GM12878 (cell line): ENCODE measurements at regions of chr6 and their contacts with region 1.

Region 1: GRCh38 chr6:72622094-72622940 is 453 bp downstream of the KCNQ5 start:
- DNase-seq: no peak
- ATAC-seq: peak; percentile 52
- H3K4me3 ChIP-seq: peak overlapping the region; percentile 100
- H3K27ac ChIP-seq: peak overlapping the region; percentile 89
- H3K4me1 ChIP-seq: peaks cover 27% of the 10 kb centered on the region
- H3K27me3 ChIP-seq: no peaks in the 10 kb centered on the region
- CTCF ChIP-seq: peak; percentile 7 to 34 (median 22); a peak in 3 of 6 replicates
- EP300 ChIP-seq: no peak
- POLR2A ChIP-seq: peak; percentile 59
- RAD21 ChIP-seq: 0 out of 2 replicates have a peak, but pooled peaks have one; percentile 5

Region 2: GRCh38 chr6:72080260-72080941 is 541.9 kb before region 1 on chr6:
- CTCF ChIA-PET with region 1: no interaction called
- POLR2A ChIA-PET with region 1: no interaction called
- RAD21 ChIA-PET with region 1: no interaction called
- SMC1A ChIA-PET with region 1: no interaction called
- in situ Hi-C with region 1: no loop called
- intact Hi-C with region 1: no loop called
- DNase-seq: no peak
- ATAC-seq: no peak
- H3K4me3 ChIP-seq: no peak overlapping the region
- H3K27ac ChIP-seq: no peak overlapping the region
- H3K4me1 ChIP-seq: no peaks in the 10 kb centered on the region
- H3K27me3 ChIP-seq: no peaks in the 10 kb centered on the region; a peak in 1 of 4 replicates
- CTCF ChIP-seq: no peak
- EP300 ChIP-seq: no peak
- POLR2A ChIP-seq: no peak
- RAD21 ChIP-seq: no peak

Region 3: DNA sequence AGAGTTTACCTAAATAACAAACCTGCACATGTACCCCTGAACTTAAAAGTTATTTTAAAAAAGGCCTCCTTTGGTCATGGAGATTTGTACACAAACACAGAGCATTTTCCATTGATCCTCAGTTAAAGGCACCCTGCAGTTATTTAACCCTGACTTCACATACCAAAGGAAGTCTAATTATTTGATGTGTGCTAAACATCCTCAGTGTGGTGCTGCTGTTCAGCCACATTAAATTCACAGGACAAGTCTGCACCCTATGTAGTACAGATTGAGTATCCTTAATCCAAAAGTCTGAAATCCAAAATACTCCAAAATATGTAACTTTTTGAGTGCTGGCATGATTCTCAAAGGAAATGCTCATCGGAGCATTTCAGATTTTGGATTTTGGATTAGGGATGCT is 20.9 kb after region 1 on chr6:
- CTCF ChIA-PET with region 1: interaction called, 53 read pairs
- POLR2A ChIA-PET with region 1: interaction called, 23 read pairs
- RAD21 ChIA-PET with region 1: interaction called, 172 read pairs
- SMC1A ChIA-PET with region 1: interaction called, 108 read pairs
- in situ Hi-C with region 1: no loop called
- intact Hi-C with region 1: no loop called
- DNase-seq: no peak
- ATAC-seq: peak; percentile 30; the same call in 1 of the 3 replicates
- H3K4me3 ChIP-seq: no peak overlapping the region
- H3K27ac ChIP-seq: no peak overlapping the region
- H3K4me1 ChIP-seq: peaks cover 4% of the 10 kb centered on the region; the same call in 1 of the 2 replicates
- H3K27me3 ChIP-seq: no peaks in the 10 kb centered on the region
- CTCF ChIP-seq: peak in 2 of 3 experiments; percentile 13 to 50; a peak in 3 of 6 replicates
- EP300 ChIP-seq: no peak
- POLR2A ChIP-seq: no peak
- RAD21 ChIP-seq: peak; percentile 57

Region 4: GRCh38 chr6:72683797-72684196 is 61.5 kb after region 1 on chr6:
- CTCF ChIA-PET with region 1: interaction called, 39 read pairs
- POLR2A ChIA-PET with region 1: interaction called, 41 read pairs
- RAD21 ChIA-PET with region 1: interaction called, 149 read pairs
- SMC1A ChIA-PET with region 1: interaction called, 245 read pairs
- in situ Hi-C with region 1: loop called (anchors 5 kb)
- intact Hi-C with region 1: loop called (anchors 1 kb)
- DNase-seq: peak; percentile 65
- ATAC-seq: peak; percentile 88
- H3K4me3 ChIP-seq: peak overlapping the region; percentile 48; the same call in 1 of the 2 replicates
- H3K27ac ChIP-seq: peak overlapping the region; percentile 89
- H3K4me1 ChIP-seq: peaks cover 19% of the 10 kb centered on the region
- H3K27me3 ChIP-seq: no peaks in the 10 kb centered on the region
- CTCF ChIP-seq: no peak
- EP300 ChIP-seq: peak; percentile 91 to 94
- POLR2A ChIP-seq: no peak
- RAD21 ChIP-seq: no peak

Region 5: DNA sequence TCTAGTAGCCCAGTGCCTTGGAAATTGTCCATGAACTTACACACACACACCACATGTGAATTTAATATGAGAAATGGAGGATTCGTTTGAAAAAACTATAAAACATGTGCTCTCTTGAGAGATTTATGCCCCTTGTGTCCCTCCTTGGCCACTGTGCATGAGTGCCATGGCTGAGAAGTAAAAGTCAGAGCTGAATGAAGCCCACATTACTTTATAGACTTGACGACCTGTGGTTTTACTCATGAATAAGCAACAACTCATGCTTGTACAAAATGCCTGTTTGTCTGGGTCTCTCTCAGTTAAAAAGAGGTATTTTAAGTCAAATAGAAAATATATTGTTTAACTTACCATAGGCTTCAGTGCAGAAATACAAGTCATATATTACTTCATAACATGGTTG is 102.2 kb after region 1 on chr6:
- CTCF ChIA-PET with region 1: interaction called, 3 read pairs
- POLR2A ChIA-PET with region 1: interaction called, 4 read pairs
- RAD21 ChIA-PET with region 1: interaction called, 12 read pairs
- SMC1A ChIA-PET with region 1: interaction called, 12 read pairs
- in situ Hi-C with region 1: no loop called
- intact Hi-C with region 1: no loop called
- DNase-seq: peak; percentile 58
- ATAC-seq: peak; percentile 99
- H3K4me3 ChIP-seq: no peak overlapping the region
- H3K27ac ChIP-seq: no peak overlapping the region
- H3K4me1 ChIP-seq: peaks cover 2% of the 10 kb centered on the region; the same call in 1 of the 2 replicates
- H3K27me3 ChIP-seq: no peaks in the 10 kb centered on the region
- CTCF ChIP-seq: no peak
- EP300 ChIP-seq: peak in 1 of 2 experiments; percentile 55; a peak in 2 of 4 replicates
- POLR2A ChIP-seq: no peak
- RAD21 ChIP-seq: no peak

Region 6: GRCh38 chr6:72769459-72770125 is 147.3 kb after region 1 on chr6:
- CTCF ChIA-PET with region 1: interaction called, 9 read pairs
- POLR2A ChIA-PET with region 1: no interaction called
- RAD21 ChIA-PET with region 1: interaction called, 3 read pairs
- SMC1A ChIA-PET with region 1: interaction called, 10 read pairs
- in situ Hi-C with region 1: no loop called
- intact Hi-C with region 1: no loop called
- DNase-seq: no peak
- ATAC-seq: peak; percentile 58
- H3K4me3 ChIP-seq: no peak overlapping the region
- H3K27ac ChIP-seq: no peak overlapping the region
- H3K4me1 ChIP-seq: peaks cover 11% of the 10 kb centered on the region
- H3K27me3 ChIP-seq: no peaks in the 10 kb centered on the region
- CTCF ChIP-seq: no peak
- EP300 ChIP-seq: no peak
- POLR2A ChIP-seq: no peak
- RAD21 ChIP-seq: no peak

Region 7: GRCh38 chr6:73079978-73080377 is 457.7 kb after region 1 on chr6:
- CTCF ChIA-PET with region 1: interaction called, 14 read pairs
- POLR2A ChIA-PET with region 1: no interaction called
- RAD21 ChIA-PET with region 1: interaction called, 13 read pairs
- SMC1A ChIA-PET with region 1: interaction called, 14 read pairs
- in situ Hi-C with region 1: no loop called
- intact Hi-C with region 1: no loop called
- DNase-seq: peak; percentile 33
- ATAC-seq: peak; percentile 89
- H3K4me3 ChIP-seq: no peak overlapping the region
- H3K27ac ChIP-seq: peak overlapping the region; percentile 55; the same call in 1 of the 2 replicates
- H3K4me1 ChIP-seq: peaks cover 3% of the 10 kb centered on the region; the same call in 1 of the 2 replicates
- H3K27me3 ChIP-seq: no peaks in the 10 kb centered on the region
- CTCF ChIP-seq: no peak
- EP300 ChIP-seq: peak; percentile 73 to 76; a peak in 2 of 4 replicates
- POLR2A ChIP-seq: no peak
- RAD21 ChIP-seq: no peak

Region 8: GRCh38 chr6:73329201-73329600 is 706.9 kb after region 1 on chr6:
- CTCF ChIA-PET with region 1: interaction called, 27 read pairs
- POLR2A ChIA-PET with region 1: no interaction called
- RAD21 ChIA-PET with region 1: no interaction called
- SMC1A ChIA-PET with region 1: interaction called, 4 read pairs
- in situ Hi-C with region 1: no loop called
- intact Hi-C with region 1: loop called (anchors 5 kb)
- DNase-seq: no peak
- ATAC-seq: peak; percentile 69
- H3K4me3 ChIP-seq: no peak overlapping the region
- H3K27ac ChIP-seq: no peak overlapping the region
- H3K4me1 ChIP-seq: peaks cover 4% of the 10 kb centered on the region; the same call in 1 of the 2 replicates
- H3K27me3 ChIP-seq: no peaks in the 10 kb centered on the region
- CTCF ChIP-seq: no peak
- EP300 ChIP-seq: no peak
- POLR2A ChIP-seq: no peak
- RAD21 ChIP-seq: no peak